Activated CD4-positive, alpha-beta memory T cell treated with anti-CD3 and anti-CD28 coated beads for 36 hours (primary cell): ENCODE measurements at regions of chr17 and their contacts with region 1.

Region 1: DNA sequence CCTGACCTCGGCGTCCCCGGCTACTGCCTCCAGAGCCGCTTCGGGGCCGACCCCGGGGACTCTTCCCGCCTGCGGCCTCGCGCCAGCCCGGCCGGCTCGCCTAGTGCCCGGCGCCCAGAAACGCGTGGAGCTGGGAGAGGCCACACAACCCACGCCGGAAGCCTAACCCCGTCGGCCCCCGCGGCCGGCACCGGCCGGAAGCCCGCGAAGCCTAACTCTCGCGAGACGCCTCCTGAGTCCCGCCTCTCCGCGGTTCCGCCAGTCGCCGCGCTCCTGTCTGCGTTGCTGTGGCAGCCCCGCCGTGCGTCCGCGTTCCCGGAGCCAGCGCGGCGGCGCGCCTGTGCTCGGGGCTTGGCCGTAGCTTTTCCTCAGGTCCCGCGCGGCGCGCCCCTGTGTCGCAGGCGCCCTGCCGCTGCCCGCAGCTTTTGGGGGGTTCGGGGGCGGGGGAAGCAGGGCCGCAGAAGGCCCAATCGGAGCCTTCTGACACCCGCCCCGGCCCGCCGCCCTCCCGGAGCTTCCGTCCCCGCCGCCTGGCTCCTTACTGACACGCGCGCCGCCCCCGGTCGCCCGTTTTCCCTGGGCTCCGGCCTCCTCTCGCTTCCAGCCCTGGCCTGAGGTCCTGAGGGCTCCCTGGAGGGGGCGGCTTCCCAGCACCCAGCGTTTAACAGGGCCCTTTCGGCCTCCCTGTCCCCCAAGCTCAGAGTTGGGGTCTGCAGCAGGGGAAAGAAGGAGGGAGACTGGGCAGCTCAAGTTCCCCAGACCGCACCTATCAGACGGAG is 21.7 kb downstream of the NPTX1 start:
- DNase-seq: peak; percentile 97
- H3K4me3 Mint-ChIP-seq: peak overlapping the region; percentile 96
- H3K27ac Mint-ChIP-seq: peak overlapping the region; percentile 92
- H3K4me1 Mint-ChIP-seq: peaks cover 16% of the 10 kb centered on the region
- H3K27me3 Mint-ChIP-seq: peaks cover 17% of the 10 kb centered on the region

Region 2: DNA sequence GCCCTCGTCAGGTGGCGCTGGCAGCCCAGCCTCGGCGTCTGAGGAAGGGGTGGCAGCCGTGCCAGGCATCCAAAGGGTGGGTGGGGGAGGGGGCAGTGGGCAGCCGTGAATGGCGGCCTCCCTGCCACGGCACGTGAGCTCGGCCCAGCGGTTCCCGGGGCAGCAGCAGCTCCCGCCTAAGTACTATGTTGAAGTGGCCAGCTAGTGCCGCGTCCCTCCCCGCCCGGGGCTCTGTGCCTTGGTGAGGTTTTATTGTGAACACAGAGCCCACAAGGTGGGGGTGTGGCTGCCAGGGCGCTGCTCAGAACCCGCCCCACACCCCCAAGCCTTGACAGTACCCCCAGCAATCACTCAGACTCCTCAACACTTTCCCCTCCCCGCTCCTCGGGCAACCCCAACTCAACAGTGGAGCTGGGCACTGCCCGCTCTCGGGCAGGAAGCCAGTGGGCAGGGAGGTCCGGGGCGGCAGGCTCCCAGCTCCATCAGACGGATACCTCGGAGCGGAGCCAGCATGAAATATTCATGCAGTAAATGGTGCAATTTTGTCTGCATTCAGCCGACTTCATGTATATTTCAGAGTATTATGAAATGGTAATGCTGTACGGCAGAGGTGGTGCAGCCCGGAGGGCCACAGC is 1299.7 kb before region 1 on chr17:
- CTCF ChIA-PET with region 1: no interaction called
- POLR2A ChIA-PET with region 1: no interaction called
- intact Hi-C with region 1: no loop called
- DNase-seq: no peak
- H3K4me3 Mint-ChIP-seq: no peak overlapping the region
- H3K27ac Mint-ChIP-seq: no peak overlapping the region
- H3K4me1 Mint-ChIP-seq: no peaks in the 10 kb centered on the region
- H3K27me3 Mint-ChIP-seq: peaks cover 4% of the 10 kb centered on the region

Region 3: GRCh38 chr17:80408872-80409271 is 45.9 kb before region 1 on chr17:
- CTCF ChIA-PET with region 1: no interaction called
- POLR2A ChIA-PET with region 1: no interaction called
- intact Hi-C with region 1: no loop called
- DNase-seq: peak; percentile 33
- H3K4me3 Mint-ChIP-seq: no peak overlapping the region
- H3K27ac Mint-ChIP-seq: no peak overlapping the region
- H3K4me1 Mint-ChIP-seq: peaks cover 6% of the 10 kb centered on the region
- H3K27me3 Mint-ChIP-seq: peaks cover 9% of the 10 kb centered on the region

Region 4: GRCh38 chr17:80465327-80465974 is 10.7 kb after region 1 on chr17:
- CTCF ChIA-PET with region 1: no interaction called
- POLR2A ChIA-PET with region 1: interaction called, 19 read pairs
- intact Hi-C with region 1: no loop called
- DNase-seq: no peak
- H3K4me3 Mint-ChIP-seq: no peak overlapping the region
- H3K27ac Mint-ChIP-seq: no peak overlapping the region
- H3K4me1 Mint-ChIP-seq: no peaks in the 10 kb centered on the region
- H3K27me3 Mint-ChIP-seq: peaks cover 45% of the 10 kb centered on the region